ENCODE measurements at regions of chr5 and their contacts with region 1.

Region 1: DNA sequence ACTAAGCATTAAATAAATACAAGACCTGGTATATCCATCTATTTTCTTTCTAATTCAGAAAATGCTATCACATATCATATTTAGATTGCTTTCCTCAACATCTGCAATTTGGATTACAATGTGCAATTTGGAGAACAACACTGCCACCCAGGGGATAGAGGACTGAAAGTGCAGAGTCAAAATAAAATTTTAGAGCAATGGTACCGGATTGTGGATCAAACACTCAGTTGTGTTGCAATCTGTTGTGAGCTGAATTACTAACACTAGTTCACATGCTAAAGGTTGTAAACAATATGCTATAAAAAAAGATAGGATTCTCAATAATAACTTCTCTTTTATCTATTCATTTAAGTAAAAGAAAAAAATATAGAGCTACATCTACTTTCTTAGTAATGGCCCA is 11.9 kb upstream of the SRFBP1 start:
- DNase-seq: peak; percentile 74
- H3K4me3 Mint-ChIP-seq: no peak overlapping the region
- H3K27ac Mint-ChIP-seq: no peak overlapping the region
- H3K4me1 Mint-ChIP-seq: no peaks in the 10 kb centered on the region
- H3K27me3 Mint-ChIP-seq: no peaks in the 10 kb centered on the region
- CTCF ChIP-seq: peak; percentile 47

Region 2: GRCh38 chr5:120062515-120063048 is 1887.3 kb before region 1 on chr5:
- CTCF ChIA-PET with region 1: no interaction called
- intact Hi-C with region 1: loop called (anchors 10 kb)
- DNase-seq: no peak
- H3K4me3 Mint-ChIP-seq: no peak overlapping the region
- H3K27ac Mint-ChIP-seq: no peak overlapping the region
- H3K4me1 Mint-ChIP-seq: no peaks in the 10 kb centered on the region
- H3K27me3 Mint-ChIP-seq: no peaks in the 10 kb centered on the region
- CTCF ChIP-seq: no peak

Region 3: GRCh38 chr5:120479066-120479465 is 1470.8 kb before region 1 on chr5:
- CTCF ChIA-PET with region 1: no interaction called
- intact Hi-C with region 1: loop called (anchors 10 kb)
- DNase-seq: no peak
- H3K4me3 Mint-ChIP-seq: no peak overlapping the region
- H3K27ac Mint-ChIP-seq: no peak overlapping the region
- H3K4me1 Mint-ChIP-seq: peaks cover 16% of the 10 kb centered on the region
- H3K27me3 Mint-ChIP-seq: no peaks in the 10 kb centered on the region
- CTCF ChIP-seq: no peak

Region 4: GRCh38 chr5:120684749-120685415 is 1265.0 kb before region 1 on chr5:
- CTCF ChIA-PET with region 1: no interaction called
- intact Hi-C with region 1: loop called (anchors 10 kb)
- DNase-seq: peak; percentile 24
- H3K4me3 Mint-ChIP-seq: no peak overlapping the region
- H3K27ac Mint-ChIP-seq: no peak overlapping the region
- H3K4me1 Mint-ChIP-seq: peaks cover 42% of the 10 kb centered on the region
- H3K27me3 Mint-ChIP-seq: no peaks in the 10 kb centered on the region
- CTCF ChIP-seq: no peak

Region 5: DNA sequence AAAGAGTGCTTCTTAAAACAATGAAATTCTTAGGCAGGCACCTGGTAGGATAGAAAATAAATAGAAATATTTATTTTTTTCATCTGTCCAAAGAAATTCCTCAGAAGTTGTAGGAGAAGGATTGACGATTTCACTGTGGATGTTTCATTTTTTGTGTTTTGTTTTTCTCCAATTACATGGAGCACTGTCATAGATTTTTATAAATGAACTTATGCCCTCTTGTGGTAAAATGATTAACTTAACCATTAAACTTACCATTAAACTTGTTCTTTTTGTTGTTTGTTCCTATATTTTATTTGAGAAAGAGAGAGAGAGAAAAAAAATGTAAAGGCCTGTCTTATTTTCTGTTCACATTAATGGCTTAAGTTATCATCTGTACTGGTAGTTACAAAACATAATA is 1146.6 kb before region 1 on chr5:
- CTCF ChIA-PET with region 1: no interaction called
- intact Hi-C with region 1: loop called (anchors 5 kb)
- DNase-seq: no peak
- H3K4me3 Mint-ChIP-seq: no peak overlapping the region
- H3K27ac Mint-ChIP-seq: no peak overlapping the region
- H3K4me1 Mint-ChIP-seq: peaks cover 14% of the 10 kb centered on the region
- H3K27me3 Mint-ChIP-seq: no peaks in the 10 kb centered on the region
- CTCF ChIP-seq: no peak

Region 6: GRCh38 chr5:120817044-120817985 is 1132.6 kb before region 1 on chr5:
- CTCF ChIA-PET with region 1: interaction called, 3 read pairs
- intact Hi-C with region 1: loop called (anchors 2 kb)
- DNase-seq: peak; percentile 36
- H3K4me3 Mint-ChIP-seq: no peak overlapping the region
- H3K27ac Mint-ChIP-seq: no peak overlapping the region
- H3K4me1 Mint-ChIP-seq: no peaks in the 10 kb centered on the region
- H3K27me3 Mint-ChIP-seq: no peaks in the 10 kb centered on the region
- CTCF ChIP-seq: peak; percentile 23

Region 7: DNA sequence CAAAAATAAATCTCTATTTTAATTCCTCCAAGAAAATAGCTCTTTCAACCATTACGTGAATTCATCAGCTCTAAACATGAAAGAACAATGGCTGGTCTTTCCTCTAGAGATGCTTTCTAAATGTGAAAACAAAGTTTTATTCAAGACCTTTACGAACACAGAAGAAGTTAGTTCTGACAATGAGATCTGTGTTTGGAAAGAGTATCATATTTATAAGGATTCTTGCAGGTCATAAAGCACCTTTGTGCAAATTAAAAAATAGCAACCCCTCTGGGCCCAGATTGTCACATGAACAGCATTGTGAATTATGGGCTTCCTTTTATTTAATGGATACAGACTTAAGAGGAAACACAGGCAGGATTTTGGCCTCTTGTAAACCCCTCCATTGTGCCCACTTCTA is 115.8 kb before region 1 on chr5:
- CTCF ChIA-PET with region 1: no interaction called
- intact Hi-C with region 1: no loop called
- DNase-seq: no peak
- H3K4me3 Mint-ChIP-seq: no peak overlapping the region
- H3K27ac Mint-ChIP-seq: no peak overlapping the region
- H3K4me1 Mint-ChIP-seq: no peaks in the 10 kb centered on the region
- H3K27me3 Mint-ChIP-seq: no peaks in the 10 kb centered on the region
- CTCF ChIP-seq: no peak

Region 8: GRCh38 chr5:121982146-121982892 is 32.5 kb after region 1 on chr5:
- CTCF ChIA-PET with region 1: no interaction called
- intact Hi-C with region 1: no loop called
- DNase-seq: no peak
- H3K4me3 Mint-ChIP-seq: no peak overlapping the region
- H3K27ac Mint-ChIP-seq: no peak overlapping the region
- H3K4me1 Mint-ChIP-seq: no peaks in the 10 kb centered on the region
- H3K27me3 Mint-ChIP-seq: no peaks in the 10 kb centered on the region
- CTCF ChIP-seq: no peak